Gastrocnemius medialis (tissue), 4 donors: ENCODE measurements at regions of chr7 and their contacts with region 1.

Region 1: GRCh38 chr7:142632291-142633134 is 116.8 kb upstream of the PRSS1 start:
- DNase-seq: peak; percentile 18 to 49
- ATAC-seq: peak; percentile 76 to 77
- H3K4me3 ChIP-seq: no peak overlapping the region
- H3K27ac ChIP-seq: no peak overlapping the region
- H3K4me1 ChIP-seq: peaks cover 0 to 11% of the 10 kb centered on the region in 2 donors
- H3K27me3 ChIP-seq: no peaks in the 10 kb centered on the region
- CTCF ChIP-seq: peak; percentile 69 to 81 (median 77)
- POLR2A ChIP-seq: no peak

Region 2: DNA sequence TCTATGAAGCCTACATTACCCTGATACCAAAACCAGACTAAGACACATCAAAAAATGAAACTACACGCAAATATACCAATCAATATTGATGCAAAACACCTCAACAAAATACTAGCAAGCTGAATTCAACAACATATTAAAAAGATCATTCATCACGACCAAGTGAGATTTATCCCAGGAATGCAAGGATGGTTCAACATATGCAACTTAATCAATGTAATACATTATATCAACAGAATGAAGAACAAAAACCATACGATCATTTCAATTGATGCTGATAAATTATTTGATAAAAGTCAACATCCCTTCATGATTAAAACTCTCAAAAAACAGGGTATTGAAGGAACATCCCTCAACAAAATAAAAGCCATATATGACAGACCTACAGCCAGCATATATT is 691.4 kb before region 1 on chr7:
- in situ Hi-C with region 1: no loop called
- intact Hi-C with region 1: no loop called
- DNase-seq: no peak
- ATAC-seq: no peak
- H3K4me3 ChIP-seq: no peak overlapping the region
- H3K27ac ChIP-seq: no peak overlapping the region
- H3K4me1 ChIP-seq: no peaks in the 10 kb centered on the region
- H3K27me3 ChIP-seq: no peaks in the 10 kb centered on the region
- CTCF ChIP-seq: no peak
- POLR2A ChIP-seq: no peak

Region 3: DNA sequence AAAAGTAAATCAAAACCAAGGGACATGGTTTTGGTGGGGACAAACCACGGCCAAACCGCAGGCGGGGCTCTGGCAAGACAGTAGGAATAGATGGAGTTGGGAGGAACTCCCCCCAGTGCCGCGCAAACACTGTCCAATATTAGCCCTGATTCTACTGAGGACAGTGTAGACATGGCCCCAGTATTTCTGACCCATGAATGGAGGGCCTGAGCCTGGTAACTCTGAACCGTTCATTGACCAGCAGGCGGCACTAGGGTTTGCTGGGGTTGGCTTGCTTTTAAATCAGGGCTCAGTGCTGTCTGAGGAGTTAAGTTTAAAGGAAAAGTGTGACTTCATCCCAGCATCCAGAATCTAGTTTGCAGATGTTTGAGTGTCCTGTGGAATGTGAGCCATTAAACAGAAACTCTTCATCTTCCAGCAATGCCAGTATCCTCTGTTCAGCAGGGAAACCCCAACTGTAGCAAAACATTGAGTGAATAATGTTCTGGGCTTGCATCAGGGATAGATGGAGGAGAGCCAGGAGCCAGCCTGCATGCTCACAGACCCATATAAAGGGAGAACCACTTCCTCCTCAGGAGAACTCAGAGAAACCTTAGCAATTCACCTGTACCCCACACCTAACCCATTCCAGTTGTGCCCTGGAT is 227.3 kb before region 1 on chr7:
- in situ Hi-C with region 1: no loop called
- intact Hi-C with region 1: no loop called
- DNase-seq: no peak
- ATAC-seq: no peak
- H3K4me3 ChIP-seq: no peak overlapping the region
- H3K27ac ChIP-seq: no peak overlapping the region
- H3K4me1 ChIP-seq: peaks cover 6 to 15% of the 10 kb centered on the region in 2 donors
- H3K27me3 ChIP-seq: no peaks in the 10 kb centered on the region
- CTCF ChIP-seq: no peak
- POLR2A ChIP-seq: no peak

Region 4: GRCh38 chr7:142535123-142535779 is 97.3 kb before region 1 on chr7:
- in situ Hi-C with region 1: loop called in 1 of 4 experiments (anchors 10 kb)
- intact Hi-C with region 1: loop called (anchors 10 kb)
- DNase-seq: peak; percentile 35 to 50
- ATAC-seq: peak; percentile 94 to 99
- H3K4me3 ChIP-seq: no peak overlapping the region
- H3K27ac ChIP-seq: no peak overlapping the region
- H3K4me1 ChIP-seq: no peaks in the 10 kb centered on the region
- H3K27me3 ChIP-seq: no peaks in the 10 kb centered on the region
- CTCF ChIP-seq: peak; percentile 60 to 82 (median 75)
- POLR2A ChIP-seq: no peak

Region 5: DNA sequence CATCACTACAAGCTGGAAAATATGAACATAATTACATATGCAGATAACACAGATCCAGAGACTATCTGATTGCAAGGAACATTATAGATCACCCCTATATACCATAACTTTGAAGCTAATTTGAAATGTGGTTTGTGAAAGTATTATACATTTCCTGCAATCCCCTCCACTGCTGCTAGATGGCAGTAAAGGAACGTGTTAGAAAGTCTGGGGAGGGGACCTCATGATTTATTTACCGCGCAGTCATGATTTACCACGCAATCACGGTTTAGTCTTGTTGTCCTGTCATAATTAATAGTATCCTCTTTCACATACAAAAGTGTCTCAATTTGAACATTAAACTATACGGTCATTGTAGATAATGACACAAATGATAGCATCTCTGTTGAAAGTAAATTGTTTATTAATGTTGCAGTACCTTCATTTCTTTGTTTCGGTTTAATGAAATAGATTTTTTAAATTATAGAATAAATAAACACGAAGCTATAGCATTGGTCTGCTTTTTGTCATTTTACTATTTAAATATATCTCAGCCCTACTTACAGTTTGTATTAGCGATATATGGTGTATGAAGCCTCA is 28.6 kb before region 1 on chr7:
- in situ Hi-C with region 1: no loop called
- intact Hi-C with region 1: loop called (anchors 2 kb)
- DNase-seq: peak; percentile 32 to 38
- ATAC-seq: peak; percentile 38 to 75
- H3K4me3 ChIP-seq: peak overlapping the region in 3 of 4 donors; percentile 12 to 36 (median 14)
- H3K27ac ChIP-seq: peak overlapping the region in 2 of 4 donors; percentile 2 to 20
- H3K4me1 ChIP-seq: peaks cover 6 to 11% of the 10 kb centered on the region in 2 donors
- H3K27me3 ChIP-seq: no peaks in the 10 kb centered on the region
- CTCF ChIP-seq: peak; percentile 71 to 89 (median 86)
- POLR2A ChIP-seq: no peak

Region 6: DNA sequence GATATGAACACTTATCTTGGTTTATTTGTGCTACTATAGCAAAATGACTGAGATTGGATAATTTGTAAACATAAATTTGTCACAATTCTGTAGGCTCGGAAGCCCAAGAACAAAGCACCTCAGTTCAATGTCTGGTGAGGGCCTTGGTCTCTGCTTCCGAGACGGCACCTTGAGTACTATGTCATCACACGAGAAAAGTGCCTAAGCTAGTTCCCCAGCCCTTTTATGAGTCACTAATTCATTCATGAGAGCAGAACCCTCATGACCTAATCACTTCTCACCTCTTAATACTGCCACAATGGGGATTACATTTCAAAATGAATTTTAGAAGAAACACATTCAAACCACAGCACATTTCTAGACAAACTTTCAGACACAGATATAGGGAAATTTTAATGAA is 64.8 kb after region 1 on chr7:
- in situ Hi-C with region 1: no loop called
- intact Hi-C with region 1: no loop called
- DNase-seq: no peak
- ATAC-seq: no peak
- H3K4me3 ChIP-seq: no peak overlapping the region
- H3K27ac ChIP-seq: no peak overlapping the region
- H3K4me1 ChIP-seq: peaks cover 0 to 4% of the 10 kb centered on the region in 2 donors
- H3K27me3 ChIP-seq: no peaks in the 10 kb centered on the region
- CTCF ChIP-seq: no peak
- POLR2A ChIP-seq: no peak

Region 7: GRCh38 chr7:142711746-142712619 is 79.5 kb after region 1 on chr7:
- in situ Hi-C with region 1: no loop called
- intact Hi-C with region 1: loop called (anchors 5 kb)
- DNase-seq: no peak
- ATAC-seq: no peak
- H3K4me3 ChIP-seq: no peak overlapping the region
- H3K27ac ChIP-seq: no peak overlapping the region
- H3K4me1 ChIP-seq: peaks cover 7 to 8% of the 10 kb centered on the region in 2 donors
- H3K27me3 ChIP-seq: no peaks in the 10 kb centered on the region
- CTCF ChIP-seq: peak; percentile 35 to 61 (median 41)
- POLR2A ChIP-seq: no peak